ENCODE measurements at regions of chr2 and their contacts with region 1.

Region 1: DNA sequence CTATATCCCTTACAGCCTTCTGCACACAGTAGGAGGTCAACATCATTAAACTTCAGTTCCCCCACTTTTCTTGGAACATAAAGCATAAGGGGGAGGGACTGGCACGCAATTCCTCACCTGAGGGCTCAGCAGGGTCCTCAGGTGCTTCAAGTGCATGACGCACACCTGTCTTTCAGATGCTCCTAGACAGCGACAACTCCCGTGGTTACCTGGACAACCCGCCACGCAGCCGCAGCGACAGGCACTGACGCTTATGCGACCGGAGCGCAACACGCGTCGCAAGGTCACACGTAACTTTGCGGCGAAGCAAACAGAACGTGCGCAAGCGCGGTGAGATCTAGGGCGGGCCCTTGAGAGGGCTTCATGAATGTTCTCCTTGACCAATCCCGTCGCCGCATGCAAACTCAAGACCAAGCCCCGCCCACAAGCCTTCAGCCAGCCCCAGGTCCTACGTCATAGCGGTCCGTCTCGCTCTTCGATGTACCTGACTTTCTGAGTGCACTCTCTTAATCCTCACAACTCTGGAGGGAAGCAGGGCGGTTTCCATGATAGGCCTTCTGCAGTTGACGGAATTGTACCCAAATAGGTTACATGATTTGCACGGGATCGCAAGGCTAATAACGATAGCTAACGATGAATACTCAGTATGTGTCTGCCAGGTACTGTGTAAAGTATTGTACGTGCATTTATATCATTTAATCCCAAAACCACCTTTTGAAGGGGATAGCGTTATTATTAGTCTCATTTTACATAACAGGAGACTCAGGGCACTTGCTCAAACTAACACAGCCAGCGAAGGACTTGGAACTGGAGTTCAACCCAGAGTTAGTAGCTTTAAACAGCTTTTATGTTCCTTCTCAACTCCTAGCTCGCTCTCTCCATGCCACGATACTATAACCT is at the start of gene IFT172:
- DNase-seq: peak; percentile 100
- ATAC-seq: peak; percentile 97
- H3K4me3 Mint-ChIP-seq: peak within 1 kb of the TSS; percentile 75
- H3K27ac Mint-ChIP-seq: peak within 1 kb of the TSS; percentile 63
- H3K4me1 Mint-ChIP-seq: peaks cover 23% of the 10 kb centered on the region
- H3K27me3 Mint-ChIP-seq: peaks cover 11% of the 10 kb centered on the region
- total RNA-seq, gene IFT172: 8.7 TPM

Region 2: DNA sequence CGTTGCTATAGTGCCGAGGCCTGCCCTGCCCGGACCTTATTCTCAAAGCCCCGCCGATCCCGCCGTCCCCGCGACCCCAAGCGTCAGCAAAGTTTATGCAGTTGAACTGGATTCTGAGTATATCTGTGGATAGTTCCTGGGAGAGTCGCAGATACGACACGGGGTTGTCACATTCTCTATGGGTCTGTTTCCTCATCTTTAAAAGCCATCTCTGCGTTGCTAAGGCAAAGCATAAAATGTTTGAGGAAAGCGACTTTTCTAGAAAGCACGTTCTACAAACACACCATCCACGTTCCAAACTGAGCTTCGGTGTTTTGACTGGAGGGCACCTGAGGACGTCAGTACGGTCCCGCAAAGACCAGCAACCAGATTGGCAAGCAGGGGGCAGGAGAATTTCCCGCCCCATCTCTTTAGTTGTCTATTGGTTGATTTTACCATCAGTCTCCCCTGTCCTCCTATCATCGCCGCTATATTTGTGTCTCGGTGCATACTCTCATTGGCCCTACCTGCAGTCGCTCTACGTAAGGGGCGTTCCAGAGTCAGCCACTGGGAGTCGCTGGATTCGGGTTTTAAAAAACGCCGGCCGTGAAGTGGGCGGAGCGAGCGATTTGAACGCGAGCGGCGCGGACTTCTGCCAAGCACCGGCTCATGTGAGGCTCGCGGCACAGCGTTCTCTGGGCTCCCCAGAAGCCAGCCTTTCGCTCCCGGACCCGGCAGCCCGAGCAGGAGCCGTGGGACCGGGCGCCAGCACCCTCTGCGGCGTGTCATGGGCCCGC is 704.1 kb before region 1 on chr2 and contains the start of gene CENPA:
- CTCF ChIA-PET with region 1: no interaction called
- POLR2A ChIA-PET with region 1: no interaction called
- intact Hi-C with region 1: loop called in 1 of 2 experiments (anchors 2 kb)
- DNase-seq: peak; percentile 97
- ATAC-seq: peak; percentile 100
- H3K4me3 Mint-ChIP-seq: peak within 1 kb of the TSS; percentile 80
- H3K27ac Mint-ChIP-seq: peak within 1 kb of the TSS; percentile 79
- H3K4me1 Mint-ChIP-seq: peaks cover 16% of the 10 kb centered on the region
- H3K27me3 Mint-ChIP-seq: peaks cover 7% of the 10 kb centered on the region
- total RNA-seq, gene CENPA: 37.0 to 38.0 TPM

Region 3: GRCh38 chr2:27380626-27381545 is 108.9 kb before region 1 on chr2 and contains the start of gene ZNF513:
- CTCF ChIA-PET with region 1: no interaction called
- POLR2A ChIA-PET with region 1: no interaction called
- intact Hi-C with region 1: loop called in 1 of 2 experiments (anchors 1 kb)
- DNase-seq: peak; percentile 95
- ATAC-seq: peak; percentile 91
- H3K4me3 Mint-ChIP-seq: peak within 1 kb of the TSS; percentile 89
- H3K27ac Mint-ChIP-seq: peak within 1 kb of the TSS; percentile 96
- H3K4me1 Mint-ChIP-seq: peaks cover 29% of the 10 kb centered on the region
- H3K27me3 Mint-ChIP-seq: no peaks in the 10 kb centered on the region
- total RNA-seq, gene ZNF513: 7.7 to 10.5 TPM

Region 4: GRCh38 chr2:27453967-27454366 is 35.8 kb before region 1 on chr2:
- CTCF ChIA-PET with region 1: no interaction called
- POLR2A ChIA-PET with region 1: no interaction called
- intact Hi-C with region 1: no loop called
- DNase-seq: no peak
- ATAC-seq: no peak
- H3K4me3 Mint-ChIP-seq: no peak overlapping the region
- H3K27ac Mint-ChIP-seq: no peak overlapping the region
- H3K4me1 Mint-ChIP-seq: peaks cover 4% of the 10 kb centered on the region
- H3K27me3 Mint-ChIP-seq: no peaks in the 10 kb centered on the region

Region 5: GRCh38 chr2:27582695-27583389 is 93.1 kb after region 1 on chr2 and contains the start of gene ZNF512:
- CTCF ChIA-PET with region 1: no interaction called
- POLR2A ChIA-PET with region 1: no interaction called
- intact Hi-C with region 1: loop called (anchors 1 kb)
- DNase-seq: peak; percentile 91
- ATAC-seq: peak; percentile 92
- H3K4me3 Mint-ChIP-seq: peak within 1 kb of the TSS; percentile 98
- H3K27ac Mint-ChIP-seq: peak within 1 kb of the TSS; percentile 98
- H3K4me1 Mint-ChIP-seq: peaks cover 47% of the 10 kb centered on the region
- H3K27me3 Mint-ChIP-seq: no peaks in the 10 kb centered on the region
- total RNA-seq, gene ZNF512: 31.8 to 34.5 TPM

Region 6: GRCh38 chr2:27638037-27638637 is 148.4 kb after region 1 on chr2:
- CTCF ChIA-PET with region 1: no interaction called
- POLR2A ChIA-PET with region 1: no interaction called
- intact Hi-C with region 1: loop called in 1 of 2 experiments (anchors 1 kb)
- DNase-seq: peak; percentile 31
- ATAC-seq: peak; percentile 88
- H3K4me3 Mint-ChIP-seq: peak overlapping the region; percentile 50
- H3K27ac Mint-ChIP-seq: peak overlapping the region; percentile 95
- H3K4me1 Mint-ChIP-seq: peaks cover 38% of the 10 kb centered on the region
- H3K27me3 Mint-ChIP-seq: no peaks in the 10 kb centered on the region